ENCODE measurements at regions of chr4 and their contacts with region 1.

Region 1: DNA sequence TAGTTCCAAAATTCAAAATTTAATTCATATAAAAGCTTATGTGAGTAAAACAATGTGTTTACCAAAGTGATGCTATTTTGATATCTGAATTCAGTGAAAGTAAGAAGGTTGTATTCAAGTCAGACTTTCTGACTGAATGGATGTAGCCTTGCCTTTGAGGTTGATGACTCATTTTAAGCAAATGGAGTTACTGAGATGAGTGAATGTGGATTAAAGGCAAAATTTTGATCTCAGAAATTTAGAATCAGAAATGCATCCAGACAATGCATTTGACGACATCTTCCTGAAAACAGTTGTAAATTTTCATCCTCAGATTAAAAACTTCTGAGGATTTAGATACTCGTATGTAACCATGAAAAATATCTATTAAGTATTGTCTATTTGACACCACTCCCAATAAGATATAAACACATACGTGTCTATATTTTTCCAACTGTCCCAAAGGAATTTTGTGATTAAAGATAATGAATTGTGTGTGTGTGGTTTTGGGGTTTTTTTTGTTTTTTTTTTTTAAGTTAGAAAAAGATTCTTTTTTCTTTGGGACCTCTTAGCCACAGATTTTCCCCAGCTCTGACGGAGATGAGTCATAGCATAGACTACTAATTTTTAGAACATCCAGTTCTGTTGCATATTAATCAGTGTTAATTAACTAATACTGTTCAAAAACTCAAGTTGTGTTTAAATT is 34.4 kb downstream of the NFKB1 start:
- DNase-seq: no peak
- H3K4me3 Mint-ChIP-seq: peak overlapping the region; percentile 39
- H3K27ac Mint-ChIP-seq: no peak overlapping the region
- H3K4me1 Mint-ChIP-seq: peaks cover 46% of the 10 kb centered on the region
- H3K27me3 Mint-ChIP-seq: no peaks in the 10 kb centered on the region

Region 2: GRCh38 chr4:102552781-102553180 is 17.2 kb after region 1 on chr4:
- intact Hi-C with region 1: loop called (anchors 2 kb)
- DNase-seq: no peak
- H3K4me3 Mint-ChIP-seq: peak overlapping the region; percentile 28
- H3K27ac Mint-ChIP-seq: peak overlapping the region; percentile 10
- H3K4me1 Mint-ChIP-seq: peaks cover 41% of the 10 kb centered on the region
- H3K27me3 Mint-ChIP-seq: no peaks in the 10 kb centered on the region

Region 3: GRCh38 chr4:102578819-102579218 is 43.3 kb after region 1 on chr4:
- intact Hi-C with region 1: loop called (anchors 1 kb)
- DNase-seq: no peak
- H3K4me3 Mint-ChIP-seq: no peak overlapping the region
- H3K27ac Mint-ChIP-seq: peak overlapping the region; percentile 40
- H3K4me1 Mint-ChIP-seq: peaks cover 80% of the 10 kb centered on the region
- H3K27me3 Mint-ChIP-seq: no peaks in the 10 kb centered on the region

Region 4: GRCh38 chr4:102598086-102598761 is 62.7 kb after region 1 on chr4:
- intact Hi-C with region 1: loop called (anchors 1 kb)
- DNase-seq: peak; percentile 34
- H3K4me3 Mint-ChIP-seq: peak overlapping the region; percentile 37
- H3K27ac Mint-ChIP-seq: peak overlapping the region; percentile 89
- H3K4me1 Mint-ChIP-seq: peaks cover 78% of the 10 kb centered on the region
- H3K27me3 Mint-ChIP-seq: no peaks in the 10 kb centered on the region

Region 5: DNA sequence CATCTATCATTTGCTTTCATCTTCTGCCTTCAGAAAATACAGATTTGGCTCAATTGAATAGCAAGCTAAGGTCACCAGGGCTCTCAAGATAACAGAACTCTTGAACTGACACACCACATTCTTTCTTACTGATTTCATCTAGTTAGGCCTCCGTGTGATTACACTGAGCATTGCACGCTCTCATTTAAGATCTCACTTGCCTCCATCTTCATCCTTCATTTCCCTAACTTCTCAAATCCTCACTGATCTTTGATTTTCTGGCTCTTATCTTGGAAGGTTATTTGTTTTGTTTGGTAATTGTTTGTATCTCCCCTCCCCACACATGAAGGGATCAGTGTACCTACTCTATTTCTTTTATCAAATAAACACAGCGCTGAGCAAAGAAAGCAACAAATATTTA is 177.6 kb after region 1 on chr4:
- intact Hi-C with region 1: no loop called
- DNase-seq: no peak
- H3K4me3 Mint-ChIP-seq: no peak overlapping the region
- H3K27ac Mint-ChIP-seq: no peak overlapping the region
- H3K4me1 Mint-ChIP-seq: no peaks in the 10 kb centered on the region
- H3K27me3 Mint-ChIP-seq: no peaks in the 10 kb centered on the region

Measured in activated T-helper 1 cell treated with anti-CD3 and anti-CD28 coated beads, Interleukin-12 subunit alpha, Interleukin-12 subunit beta, Interleukin-2, Interleukin-4 antibody, amounts not matched to agents 30 ng/mL and 10 ng/mL and 1 ng/mL, durations not matched to agents 14 hours and 24 hours and 36 hours (primary cell).